ENCODE measurements at regions of chr3 and their contacts with region 1.

Region 1: GRCh38 chr3:160003520-160004128 is 15.0 kb downstream of the IL12A start:
- DNase-seq: no peak
- H3K4me3 ChIP-seq: no peak overlapping the region
- H3K27ac ChIP-seq: no peak overlapping the region
- H3K4me1 ChIP-seq: no peaks in the 10 kb centered on the region
- H3K27me3 ChIP-seq: no peaks in the 10 kb centered on the region
- CTCF ChIP-seq: peak; percentile 28 to 30

Region 2: GRCh38 chr3:159260049-159260662 is 743.5 kb before region 1 on chr3:
- intact Hi-C with region 1: loop called (anchors 10 kb)
- DNase-seq: no peak
- H3K4me3 ChIP-seq: no peak overlapping the region
- H3K27ac ChIP-seq: no peak overlapping the region
- H3K4me1 ChIP-seq: no peaks in the 10 kb centered on the region
- H3K27me3 ChIP-seq: peaks cover 0 to 3% of the 10 kb centered on the region in 2 donors
- CTCF ChIP-seq: peak; percentile 58 to 64

Region 3: GRCh38 chr3:159616212-159616825 is 387.3 kb before region 1 on chr3:
- intact Hi-C with region 1: loop called (anchors 10 kb)
- DNase-seq: peak in 1 of 2 donors; percentile 68
- H3K4me3 ChIP-seq: no peak overlapping the region
- H3K27ac ChIP-seq: no peak overlapping the region
- H3K4me1 ChIP-seq: peaks cover 0 to 22% (median 0%) of the 10 kb centered on the region in 4 donors
- H3K27me3 ChIP-seq: no peaks in the 10 kb centered on the region
- CTCF ChIP-seq: peak; percentile 71 to 81

Region 4: DNA sequence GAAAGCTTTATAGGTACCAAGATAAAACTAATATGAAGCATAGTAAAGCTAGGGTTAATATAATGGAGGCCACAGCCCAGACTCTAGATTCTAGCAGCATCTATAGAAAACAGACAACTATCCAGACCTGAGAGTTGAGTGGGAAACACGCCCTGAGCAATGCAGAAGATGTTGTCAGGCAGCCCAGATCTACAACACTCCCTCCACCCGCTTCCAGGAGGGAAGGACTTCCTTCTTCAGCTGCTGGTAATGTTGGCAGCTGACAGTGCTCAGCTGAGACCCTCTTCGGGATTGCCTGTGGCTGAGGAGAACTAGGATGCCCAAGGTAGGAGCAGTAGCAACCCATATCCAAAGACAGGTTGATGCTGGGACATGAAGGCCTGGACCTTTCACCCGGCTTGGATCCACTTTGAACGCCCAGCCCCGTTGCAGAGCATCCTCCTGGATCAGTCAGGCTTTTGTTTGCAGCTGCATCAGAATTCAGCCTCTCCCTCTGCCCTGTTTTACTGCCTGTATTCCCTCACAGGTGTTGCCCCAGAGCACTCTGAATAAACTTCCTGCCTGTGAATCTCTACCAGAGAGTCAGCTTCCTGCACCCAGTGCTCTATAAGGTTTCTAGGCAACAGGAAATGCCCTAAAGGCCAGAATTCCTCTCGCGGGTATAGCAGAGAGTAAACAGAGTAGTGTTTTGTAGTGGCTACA is 189.7 kb before region 1 on chr3:
- intact Hi-C with region 1: loop called (anchors 5 kb)
- DNase-seq: no peak
- H3K4me3 ChIP-seq: no peak overlapping the region
- H3K27ac ChIP-seq: no peak overlapping the region
- H3K4me1 ChIP-seq: peaks cover 0 to 40% (median 12%) of the 10 kb centered on the region in 4 donors
- H3K27me3 ChIP-seq: no peaks in the 10 kb centered on the region
- CTCF ChIP-seq: no peak

Region 5: GRCh38 chr3:159832024-159832423 is 171.6 kb before region 1 on chr3:
- intact Hi-C with region 1: loop called (anchors 5 kb)
- DNase-seq: no peak
- H3K4me3 ChIP-seq: no peak overlapping the region
- H3K27ac ChIP-seq: no peak overlapping the region
- H3K4me1 ChIP-seq: peaks cover 0 to 52% (median 19%) of the 10 kb centered on the region in 4 donors
- H3K27me3 ChIP-seq: no peaks in the 10 kb centered on the region
- CTCF ChIP-seq: no peak

Region 6: DNA sequence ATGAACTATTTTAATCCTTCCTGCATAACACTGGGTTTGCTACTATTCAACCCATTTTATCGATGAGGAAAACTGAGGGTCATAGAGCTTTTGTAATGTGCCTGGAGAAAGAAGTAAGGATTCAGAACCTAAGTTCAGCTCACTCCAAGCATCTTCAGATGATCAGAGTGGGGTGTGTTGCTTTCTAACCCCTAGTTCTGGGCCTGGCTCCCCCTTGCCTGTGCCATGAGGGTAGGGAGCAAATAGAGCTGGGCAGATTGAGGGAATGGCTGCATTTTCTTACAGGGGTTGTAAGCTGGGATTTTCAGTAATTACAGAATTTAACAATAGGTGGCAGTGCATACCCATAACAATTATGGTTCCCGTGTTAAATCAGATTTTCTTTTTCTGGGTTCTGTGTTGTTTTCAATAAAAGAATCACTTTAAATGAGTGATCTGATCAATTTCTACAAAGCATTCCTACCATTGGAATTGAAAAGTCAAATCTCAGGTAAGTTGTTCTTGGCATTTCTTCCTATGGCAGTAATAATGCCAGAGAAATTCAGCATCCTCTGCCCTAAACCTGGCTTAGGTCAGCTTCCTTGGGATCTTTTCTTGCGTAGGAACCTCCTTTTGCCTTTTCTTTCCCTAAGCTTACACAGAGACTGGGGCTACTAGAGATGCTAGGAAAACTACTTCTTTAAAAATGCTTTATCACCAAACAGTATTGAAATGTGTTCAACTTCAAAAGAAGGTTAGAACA is 118.8 kb before region 1 on chr3:
- intact Hi-C with region 1: loop called (anchors 5 kb)
- DNase-seq: no peak
- H3K4me3 ChIP-seq: no peak overlapping the region
- H3K27ac ChIP-seq: no peak overlapping the region
- H3K4me1 ChIP-seq: peaks cover 0 to 69% (median 34%) of the 10 kb centered on the region in 4 donors
- H3K27me3 ChIP-seq: no peaks in the 10 kb centered on the region
- CTCF ChIP-seq: peak; percentile 49 to 55

Region 7: GRCh38 chr3:159892171-159892795 is 111.3 kb before region 1 on chr3:
- intact Hi-C with region 1: loop called (anchors 5 kb)
- DNase-seq: no peak
- H3K4me3 ChIP-seq: no peak overlapping the region
- H3K27ac ChIP-seq: no peak overlapping the region
- H3K4me1 ChIP-seq: peaks cover 0 to 50% (median 23%) of the 10 kb centered on the region in 4 donors
- H3K27me3 ChIP-seq: no peaks in the 10 kb centered on the region
- CTCF ChIP-seq: no peak

Measured in tibial artery (tissue), 4 donors.